ENCODE measurements at regions of chr6 and their contacts with region 1.

Region 1: DNA sequence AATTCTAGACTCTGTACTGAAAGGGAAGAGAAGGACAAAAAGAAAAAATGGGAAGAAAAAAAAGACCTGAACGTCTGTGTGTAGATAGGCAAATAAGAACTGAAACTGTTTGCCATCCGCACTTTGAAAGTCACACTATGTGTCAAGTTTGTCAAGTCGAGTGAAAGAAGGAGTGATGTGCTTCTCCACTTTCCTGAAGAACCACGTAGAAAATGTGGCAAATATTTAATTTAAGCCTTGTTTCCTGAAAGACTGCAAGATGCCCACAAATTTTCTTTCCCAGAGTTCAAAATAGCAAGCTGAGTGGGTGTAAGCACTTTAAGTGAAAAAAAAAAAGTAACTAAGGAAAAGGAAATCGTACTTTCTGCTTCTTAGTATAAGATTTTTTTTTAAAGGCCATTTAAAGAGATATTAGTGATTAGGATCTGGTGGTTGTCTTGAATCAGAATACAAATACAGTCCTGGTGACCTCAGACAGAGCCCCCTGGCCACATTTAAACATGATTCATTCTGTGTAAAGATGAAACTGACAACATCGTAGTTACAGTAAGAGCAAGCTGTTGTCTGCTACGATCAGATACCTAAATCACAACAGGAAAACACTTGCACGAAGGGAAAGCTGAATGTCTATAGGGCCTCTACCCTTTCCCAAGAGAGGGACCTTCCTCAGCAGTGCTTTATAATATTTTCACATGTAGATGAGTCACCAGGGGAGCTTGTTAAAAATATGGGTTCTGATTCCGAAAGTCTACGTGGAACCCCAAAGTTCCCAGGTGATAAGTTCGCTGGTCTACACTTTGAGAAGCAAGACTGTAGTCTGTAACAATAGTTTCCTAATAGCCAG is 102.3 kb downstream of the HIVEP2 start:
- DNase-seq: peak; percentile 66
- ATAC-seq: peak; percentile 80
- H3K4me3 Mint-ChIP-seq: peak overlapping the region; percentile 71
- H3K27ac Mint-ChIP-seq: peak overlapping the region; percentile 97
- H3K4me1 Mint-ChIP-seq: peaks cover 89% of the 10 kb centered on the region
- H3K27me3 Mint-ChIP-seq: no peaks in the 10 kb centered on the region

Region 2: GRCh38 chr6:142692942-142693341 is 149.7 kb before region 1 on chr6:
- CTCF ChIA-PET with region 1: interaction called, 3 read pairs
- POLR2A ChIA-PET with region 1: no interaction called
- intact Hi-C with region 1: loop called (anchors 2 to 5 kb)
- DNase-seq: peak; percentile 79
- ATAC-seq: peak; percentile 75
- H3K4me3 Mint-ChIP-seq: no peak overlapping the region
- H3K27ac Mint-ChIP-seq: peak overlapping the region; percentile 62
- H3K4me1 Mint-ChIP-seq: peaks cover 27% of the 10 kb centered on the region
- H3K27me3 Mint-ChIP-seq: no peaks in the 10 kb centered on the region

Region 3: GRCh38 chr6:142802124-142802523 is 40.5 kb before region 1 on chr6:
- CTCF ChIA-PET with region 1: interaction called, 4 read pairs
- POLR2A ChIA-PET with region 1: interaction called, 3 read pairs
- intact Hi-C with region 1: loop called in 1 of 2 experiments (anchors 5 kb)
- DNase-seq: peak; percentile 73
- ATAC-seq: peak; percentile 92
- H3K4me3 Mint-ChIP-seq: no peak overlapping the region
- H3K27ac Mint-ChIP-seq: peak overlapping the region; percentile 91
- H3K4me1 Mint-ChIP-seq: peaks cover 94% of the 10 kb centered on the region
- H3K27me3 Mint-ChIP-seq: no peaks in the 10 kb centered on the region

Region 4: GRCh38 chr6:142827369-142827768 is 15.3 kb before region 1 on chr6:
- CTCF ChIA-PET with region 1: interaction called, 37 read pairs
- POLR2A ChIA-PET with region 1: interaction called, 7 read pairs
- intact Hi-C with region 1: loop called in 1 of 2 experiments (anchors 1 kb)
- DNase-seq: no peak
- ATAC-seq: no peak
- H3K4me3 Mint-ChIP-seq: no peak overlapping the region
- H3K27ac Mint-ChIP-seq: no peak overlapping the region
- H3K4me1 Mint-ChIP-seq: peaks cover 73% of the 10 kb centered on the region
- H3K27me3 Mint-ChIP-seq: no peaks in the 10 kb centered on the region

Region 5: GRCh38 chr6:142857233-142857761 is 14.7 kb after region 1 on chr6:
- CTCF ChIA-PET with region 1: interaction called, 22 read pairs
- POLR2A ChIA-PET with region 1: interaction called, 6 read pairs
- intact Hi-C with region 1: loop called in 1 of 2 experiments (anchors 2 kb)
- DNase-seq: no peak
- ATAC-seq: no peak
- H3K4me3 Mint-ChIP-seq: peak overlapping the region; percentile 60
- H3K27ac Mint-ChIP-seq: peak overlapping the region; percentile 90
- H3K4me1 Mint-ChIP-seq: peaks cover 92% of the 10 kb centered on the region
- H3K27me3 Mint-ChIP-seq: no peaks in the 10 kb centered on the region

Region 6: GRCh38 chr6:142885182-142885867 is 42.7 kb after region 1 on chr6:
- CTCF ChIA-PET with region 1: interaction called, 8 read pairs
- POLR2A ChIA-PET with region 1: interaction called, 3 read pairs
- intact Hi-C with region 1: loop called in 1 of 2 experiments (anchors 1 kb)
- DNase-seq: peak; percentile 55
- ATAC-seq: peak; percentile 82
- H3K4me3 Mint-ChIP-seq: peak overlapping the region; percentile 76
- H3K27ac Mint-ChIP-seq: peak overlapping the region; percentile 99
- H3K4me1 Mint-ChIP-seq: peaks cover 88% of the 10 kb centered on the region
- H3K27me3 Mint-ChIP-seq: no peaks in the 10 kb centered on the region

Region 7: DNA sequence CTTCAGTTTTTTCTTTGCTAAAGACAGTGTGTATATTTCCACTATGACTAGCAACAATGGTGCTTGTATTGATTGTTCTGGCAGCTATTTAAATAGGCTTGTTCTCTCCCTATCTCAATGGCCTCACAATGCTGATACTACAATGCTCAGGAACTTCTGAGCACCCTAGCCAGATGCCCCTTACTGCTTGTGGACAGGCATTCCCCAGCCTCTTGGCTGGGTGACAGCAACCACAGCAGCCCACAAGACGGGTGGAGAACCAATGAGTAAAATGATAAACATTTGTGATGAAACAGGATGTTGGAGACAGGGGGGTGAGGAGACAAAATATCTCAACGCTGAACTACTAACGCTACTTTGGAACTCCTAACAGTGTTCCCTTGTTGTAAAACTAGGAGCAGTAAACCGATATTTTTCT is 60.0 kb after region 1 on chr6:
- CTCF ChIA-PET with region 1: interaction called, 4 read pairs
- POLR2A ChIA-PET with region 1: interaction called, 6 read pairs
- intact Hi-C with region 1: loop called in 1 of 2 experiments (anchors 2 kb)
- DNase-seq: peak; percentile 84
- ATAC-seq: peak; percentile 56
- H3K4me3 Mint-ChIP-seq: peak overlapping the region; percentile 65
- H3K27ac Mint-ChIP-seq: peak overlapping the region; percentile 94
- H3K4me1 Mint-ChIP-seq: peaks cover 64% of the 10 kb centered on the region
- H3K27me3 Mint-ChIP-seq: no peaks in the 10 kb centered on the region

Region 8: DNA sequence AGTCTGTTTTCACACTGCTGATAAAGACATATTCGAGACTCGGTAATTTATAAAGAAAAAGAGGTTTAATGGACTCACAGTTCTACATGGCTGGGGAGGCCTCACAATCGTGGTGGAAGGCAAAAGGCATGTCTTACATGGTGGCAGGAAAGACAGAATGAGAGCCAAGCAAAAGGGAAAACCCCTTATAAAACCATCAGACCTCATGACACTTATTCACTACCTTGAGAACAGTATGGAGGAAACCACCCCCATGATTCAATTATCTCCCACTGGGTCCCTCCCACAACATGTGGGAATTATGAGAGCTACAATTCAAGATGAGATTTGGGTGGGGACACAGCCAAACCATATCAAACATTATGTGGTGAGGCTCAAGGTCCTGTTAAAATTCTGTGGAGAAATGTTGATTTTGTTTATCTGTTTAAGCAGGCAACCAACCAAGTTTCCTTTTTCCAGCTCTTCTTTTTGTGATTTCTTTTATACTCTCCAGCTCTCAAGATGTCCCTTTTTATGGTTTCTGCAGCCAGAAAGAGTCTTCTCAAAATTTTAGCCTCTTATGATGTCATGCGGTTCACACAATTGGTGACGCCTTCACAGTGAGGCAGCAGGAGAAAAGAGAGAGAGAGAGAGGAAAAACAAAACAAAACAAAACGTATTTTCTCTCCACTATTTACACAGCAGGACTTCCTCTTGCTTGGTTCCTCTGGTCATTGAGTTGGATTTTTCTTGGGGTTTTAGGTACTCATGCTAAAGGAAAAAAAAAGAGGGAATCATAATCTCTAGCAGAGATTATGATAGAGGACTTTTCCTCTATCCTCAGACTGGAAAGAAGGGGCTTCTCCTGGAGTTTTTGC is 236.1 kb after region 1 on chr6:
- CTCF ChIA-PET with region 1: no interaction called
- POLR2A ChIA-PET with region 1: no interaction called
- intact Hi-C with region 1: no loop called
- DNase-seq: no peak
- ATAC-seq: no peak
- H3K4me3 Mint-ChIP-seq: no peak overlapping the region
- H3K27ac Mint-ChIP-seq: no peak overlapping the region
- H3K4me1 Mint-ChIP-seq: peaks cover 13% of the 10 kb centered on the region
- H3K27me3 Mint-ChIP-seq: no peaks in the 10 kb centered on the region

Region 9: DNA sequence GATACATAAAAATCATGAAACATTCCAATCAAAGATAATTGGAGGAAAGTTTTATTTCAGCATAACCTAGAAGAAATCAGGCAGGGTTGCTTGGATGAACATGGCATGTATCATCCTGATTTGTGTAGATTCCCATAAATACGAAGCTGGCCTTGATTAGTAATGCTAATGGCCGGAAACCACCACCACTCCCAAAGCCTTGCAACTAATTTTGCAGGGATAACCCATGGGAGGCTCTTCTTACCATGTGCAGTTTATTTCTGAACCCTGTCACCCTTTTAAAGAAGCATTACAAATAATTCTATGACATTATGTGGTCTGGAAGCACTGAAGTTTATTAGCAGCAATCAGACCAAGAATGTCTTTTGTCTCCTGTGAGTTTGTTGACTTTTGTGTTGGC is 298.8 kb after region 1 on chr6:
- CTCF ChIA-PET with region 1: no interaction called
- POLR2A ChIA-PET with region 1: no interaction called
- intact Hi-C with region 1: no loop called
- DNase-seq: no peak
- ATAC-seq: no peak
- H3K4me3 Mint-ChIP-seq: no peak overlapping the region
- H3K27ac Mint-ChIP-seq: no peak overlapping the region
- H3K4me1 Mint-ChIP-seq: peaks cover 49% of the 10 kb centered on the region
- H3K27me3 Mint-ChIP-seq: no peaks in the 10 kb centered on the region

Measured in activated CD4-positive, alpha-beta T cell treated with anti-CD3 and anti-CD28 coated beads for 36 hours (primary cell).